Activated CD4-positive, alpha-beta memory T cell treated with anti-CD3 and anti-CD28 coated beads for 36 hours (primary cell): ENCODE measurements at regions of chr10 and their contacts with region 1.

Region 1: DNA sequence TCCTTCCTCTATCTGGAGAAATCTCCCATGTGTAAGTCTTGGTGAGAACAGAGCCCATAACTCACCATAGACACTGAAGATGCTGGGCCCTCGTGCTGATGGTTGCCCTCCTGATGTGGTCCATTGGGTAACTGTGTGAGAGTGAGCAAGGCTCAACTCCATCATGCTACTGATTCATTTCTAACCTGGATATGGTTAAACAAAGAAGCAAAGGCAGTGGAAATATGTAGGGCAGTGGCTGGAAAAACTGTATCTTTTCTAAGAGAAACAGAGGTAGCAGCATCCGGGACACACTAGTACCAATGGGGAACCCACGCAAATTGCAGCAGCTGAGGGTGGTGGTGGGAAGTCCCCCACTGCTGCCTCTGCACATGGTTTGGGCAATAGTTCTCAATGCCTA is 221.7 kb downstream of the KLF6 start:
- DNase-seq: peak; percentile 82
- H3K4me3 Mint-ChIP-seq: no peak overlapping the region
- H3K27ac Mint-ChIP-seq: peak overlapping the region; percentile 35
- H3K4me1 Mint-ChIP-seq: peaks cover 27% of the 10 kb centered on the region
- H3K27me3 Mint-ChIP-seq: no peaks in the 10 kb centered on the region

Region 2: GRCh38 chr10:3482200-3483138 is 80.8 kb before region 1 on chr10:
- CTCF ChIA-PET with region 1: no interaction called
- POLR2A ChIA-PET with region 1: no interaction called
- intact Hi-C with region 1: loop called (anchors 5 kb)
- DNase-seq: peak; percentile 30
- H3K4me3 Mint-ChIP-seq: no peak overlapping the region
- H3K27ac Mint-ChIP-seq: peak overlapping the region; percentile 2
- H3K4me1 Mint-ChIP-seq: peaks cover 43% of the 10 kb centered on the region
- H3K27me3 Mint-ChIP-seq: peaks cover 2% of the 10 kb centered on the region

Region 3: GRCh38 chr10:3516234-3516922 is 46.9 kb before region 1 on chr10:
- CTCF ChIA-PET with region 1: no interaction called
- POLR2A ChIA-PET with region 1: no interaction called
- intact Hi-C with region 1: loop called (anchors 5 kb)
- DNase-seq: peak; percentile 54
- H3K4me3 Mint-ChIP-seq: no peak overlapping the region
- H3K27ac Mint-ChIP-seq: peak overlapping the region; percentile 24
- H3K4me1 Mint-ChIP-seq: peaks cover 15% of the 10 kb centered on the region
- H3K27me3 Mint-ChIP-seq: peaks cover 3% of the 10 kb centered on the region

Region 4: GRCh38 chr10:3652886-3653285 is 89.6 kb after region 1 on chr10:
- CTCF ChIA-PET with region 1: no interaction called
- POLR2A ChIA-PET with region 1: no interaction called
- intact Hi-C with region 1: no loop called
- DNase-seq: peak; percentile 69
- H3K4me3 Mint-ChIP-seq: peak overlapping the region; percentile 68
- H3K27ac Mint-ChIP-seq: no peak overlapping the region
- H3K4me1 Mint-ChIP-seq: peaks cover 12% of the 10 kb centered on the region
- H3K27me3 Mint-ChIP-seq: peaks cover 8% of the 10 kb centered on the region